ENCODE measurements at regions of chr14 and their contacts with region 1.

Region 1: DNA sequence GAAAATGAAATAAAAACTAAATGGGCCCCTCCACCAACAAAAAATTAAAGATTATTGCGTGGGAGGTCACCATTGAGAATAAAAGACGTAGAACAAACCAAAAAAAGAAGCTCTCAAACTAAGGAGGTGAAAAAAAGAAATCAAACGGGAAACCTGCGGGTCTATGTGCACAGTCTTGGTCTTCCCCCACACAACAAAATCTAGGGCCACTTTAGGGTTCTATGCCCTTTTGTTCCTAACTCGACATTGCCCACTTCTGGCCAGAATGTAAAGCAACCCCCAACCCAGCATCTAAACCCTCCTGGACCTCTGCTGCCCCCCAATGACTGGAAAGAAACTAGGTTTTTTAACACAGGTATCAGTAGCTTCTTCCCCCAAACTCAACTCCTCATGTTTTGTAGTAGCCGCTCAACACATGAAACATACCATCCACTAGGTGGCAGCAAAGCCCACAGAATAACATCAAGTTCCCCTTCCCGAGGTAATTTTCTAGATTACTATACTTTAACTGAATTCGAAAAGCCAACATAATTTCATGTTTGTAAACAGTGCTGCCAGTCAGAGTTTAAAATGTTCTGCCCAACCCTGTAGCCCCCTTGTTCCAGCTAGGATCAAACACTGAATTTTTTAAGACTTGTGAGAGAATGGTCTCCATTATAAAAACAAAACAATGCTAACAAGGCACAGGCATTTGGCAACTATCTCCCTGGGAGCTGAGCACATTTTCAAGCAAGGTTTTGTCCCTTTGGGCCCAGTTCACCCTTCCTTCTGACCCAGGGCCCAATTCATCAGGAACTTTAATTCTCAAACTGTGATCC is 18.7 kb downstream of the DAD1 start:
- DNase-seq: peak; percentile 91
- H3K4me3 Mint-ChIP-seq: peak overlapping the region; percentile 79
- H3K27ac Mint-ChIP-seq: peak overlapping the region; percentile 98
- H3K4me1 Mint-ChIP-seq: peaks cover 59% of the 10 kb centered on the region
- H3K27me3 Mint-ChIP-seq: no peaks in the 10 kb centered on the region

Region 2: GRCh38 chr14:21917699-21918436 is 652.5 kb before region 1 on chr14:
- CTCF ChIA-PET with region 1: interaction called, 31 read pairs
- DNase-seq: peak; percentile 77
- H3K4me3 Mint-ChIP-seq: peak overlapping the region; percentile 71
- H3K27ac Mint-ChIP-seq: peak overlapping the region; percentile 81
- H3K4me1 Mint-ChIP-seq: peaks cover 78% of the 10 kb centered on the region
- H3K27me3 Mint-ChIP-seq: no peaks in the 10 kb centered on the region

Region 3: GRCh38 chr14:22002860-22003309 is 567.5 kb before region 1 on chr14:
- CTCF ChIA-PET with region 1: interaction called, 19 read pairs
- DNase-seq: peak; percentile 80
- H3K4me3 Mint-ChIP-seq: peak overlapping the region; percentile 70
- H3K27ac Mint-ChIP-seq: peak overlapping the region; percentile 87
- H3K4me1 Mint-ChIP-seq: peaks cover 36% of the 10 kb centered on the region
- H3K27me3 Mint-ChIP-seq: no peaks in the 10 kb centered on the region

Region 4: DNA sequence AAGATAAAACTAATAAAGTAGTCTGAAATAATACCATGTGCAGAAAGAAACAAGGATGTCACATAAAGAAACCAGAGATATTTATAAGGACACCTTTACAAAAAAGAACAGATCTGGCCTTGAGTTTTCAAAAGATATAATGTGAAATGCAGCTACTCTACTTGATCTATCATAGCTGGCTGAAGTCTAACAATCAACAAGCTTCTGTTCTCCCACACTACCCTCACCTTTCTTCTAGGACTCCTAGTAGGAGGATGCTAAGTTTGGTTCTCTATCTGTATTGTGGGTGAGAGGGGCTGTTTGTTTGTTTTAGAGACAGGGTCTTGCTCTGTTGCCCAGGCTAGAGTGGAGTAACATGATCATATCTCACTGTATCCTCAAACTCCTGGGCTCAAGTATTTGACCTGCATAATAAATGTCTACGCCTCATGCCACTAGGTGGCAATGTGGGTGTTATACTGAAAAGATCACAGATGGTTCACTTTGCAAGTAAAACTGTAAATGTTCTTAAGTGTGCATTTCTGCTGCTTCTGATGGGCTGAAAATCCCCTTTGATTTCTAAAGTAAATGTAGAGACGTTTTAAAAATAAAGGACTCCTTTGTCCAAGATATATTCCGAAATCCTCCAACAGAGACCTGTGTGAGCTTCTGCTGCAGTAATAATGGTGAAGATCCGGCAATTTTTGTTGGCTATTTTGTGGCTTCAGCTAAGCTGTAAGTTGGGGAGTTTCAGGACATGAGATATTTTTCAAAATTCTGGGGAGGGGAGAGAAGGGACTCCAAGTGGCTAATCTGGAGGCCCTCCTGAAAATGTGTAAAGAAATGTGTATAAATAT is 250.6 kb before region 1 on chr14:
- CTCF ChIA-PET with region 1: no interaction called
- DNase-seq: peak; percentile 25
- H3K4me3 Mint-ChIP-seq: peak overlapping the region; percentile 66
- H3K27ac Mint-ChIP-seq: peak overlapping the region; percentile 84
- H3K4me1 Mint-ChIP-seq: no peaks in the 10 kb centered on the region
- H3K27me3 Mint-ChIP-seq: no peaks in the 10 kb centered on the region

Region 5: DNA sequence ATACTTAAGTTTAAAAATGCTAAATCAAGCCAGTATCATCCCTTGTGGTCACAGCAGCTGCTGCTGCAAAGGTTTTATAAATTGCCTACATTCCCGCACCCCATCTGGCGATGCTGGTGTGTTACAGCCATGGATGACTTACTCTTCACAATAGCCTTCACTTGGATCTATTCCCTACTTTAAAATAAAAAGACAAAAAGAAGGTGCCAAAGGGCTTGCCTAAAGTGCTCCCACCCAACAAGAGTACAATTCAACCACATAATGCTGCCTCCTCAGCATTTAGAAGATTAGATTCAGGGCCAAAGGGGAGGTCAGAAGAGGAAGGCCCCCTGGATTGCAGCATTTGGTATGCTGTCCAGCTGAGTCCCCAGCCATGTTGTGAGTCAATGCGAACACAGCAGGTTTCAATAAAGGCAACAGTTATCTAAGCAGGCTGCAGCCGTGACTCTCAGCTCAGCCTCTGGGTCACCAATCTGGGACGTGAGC is 157.4 kb before region 1 on chr14:
- CTCF ChIA-PET with region 1: no interaction called
- DNase-seq: no peak
- H3K4me3 Mint-ChIP-seq: no peak overlapping the region
- H3K27ac Mint-ChIP-seq: no peak overlapping the region
- H3K4me1 Mint-ChIP-seq: no peaks in the 10 kb centered on the region
- H3K27me3 Mint-ChIP-seq: no peaks in the 10 kb centered on the region

Region 6: GRCh38 chr14:22489957-22490950 is 80.1 kb before region 1 on chr14:
- CTCF ChIA-PET with region 1: no interaction called
- DNase-seq: no peak
- H3K4me3 Mint-ChIP-seq: peak overlapping the region; percentile 84
- H3K27ac Mint-ChIP-seq: peak overlapping the region; percentile 96
- H3K4me1 Mint-ChIP-seq: peaks cover 16% of the 10 kb centered on the region
- H3K27me3 Mint-ChIP-seq: no peaks in the 10 kb centered on the region

Region 7: DNA sequence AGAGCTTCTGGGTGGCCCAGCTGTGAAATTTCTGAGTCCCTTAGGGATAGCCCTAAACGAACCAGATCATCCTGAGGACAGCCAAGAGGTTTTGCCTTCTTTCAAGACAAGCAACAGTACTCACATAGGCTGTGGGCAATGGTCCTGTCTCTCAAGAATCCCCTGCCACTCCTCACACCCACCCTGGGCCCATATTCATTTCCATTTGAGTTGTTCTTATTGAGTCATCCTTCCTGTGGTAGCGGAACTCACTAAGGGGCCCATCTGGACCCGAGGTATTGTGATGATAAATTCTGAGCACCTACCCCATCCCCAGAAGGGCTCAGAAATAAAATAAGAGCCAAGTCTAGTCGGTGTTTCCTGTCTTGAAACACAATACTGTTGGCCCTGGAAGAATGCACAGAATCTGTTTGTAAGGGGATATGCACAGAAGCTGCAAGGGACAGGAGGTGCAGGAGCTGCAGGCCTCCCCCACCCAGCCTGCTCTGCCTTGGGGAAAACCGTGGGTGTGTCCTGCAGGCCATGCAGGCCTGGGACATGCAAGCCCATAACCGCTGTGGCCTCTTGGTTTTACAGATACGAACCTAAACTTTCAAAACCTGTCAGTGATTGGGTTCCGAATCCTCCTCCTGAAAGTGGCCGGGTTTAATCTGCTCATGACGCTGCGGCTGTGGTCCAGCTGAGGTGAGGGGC is 20.2 kb before region 1 on chr14:
- CTCF ChIA-PET with region 1: interaction called, 139 read pairs
- DNase-seq: peak; percentile 69
- H3K4me3 Mint-ChIP-seq: peak overlapping the region; percentile 67
- H3K27ac Mint-ChIP-seq: peak overlapping the region; percentile 95
- H3K4me1 Mint-ChIP-seq: peaks cover 95% of the 10 kb centered on the region
- H3K27me3 Mint-ChIP-seq: peaks cover 4% of the 10 kb centered on the region

Region 8: DNA sequence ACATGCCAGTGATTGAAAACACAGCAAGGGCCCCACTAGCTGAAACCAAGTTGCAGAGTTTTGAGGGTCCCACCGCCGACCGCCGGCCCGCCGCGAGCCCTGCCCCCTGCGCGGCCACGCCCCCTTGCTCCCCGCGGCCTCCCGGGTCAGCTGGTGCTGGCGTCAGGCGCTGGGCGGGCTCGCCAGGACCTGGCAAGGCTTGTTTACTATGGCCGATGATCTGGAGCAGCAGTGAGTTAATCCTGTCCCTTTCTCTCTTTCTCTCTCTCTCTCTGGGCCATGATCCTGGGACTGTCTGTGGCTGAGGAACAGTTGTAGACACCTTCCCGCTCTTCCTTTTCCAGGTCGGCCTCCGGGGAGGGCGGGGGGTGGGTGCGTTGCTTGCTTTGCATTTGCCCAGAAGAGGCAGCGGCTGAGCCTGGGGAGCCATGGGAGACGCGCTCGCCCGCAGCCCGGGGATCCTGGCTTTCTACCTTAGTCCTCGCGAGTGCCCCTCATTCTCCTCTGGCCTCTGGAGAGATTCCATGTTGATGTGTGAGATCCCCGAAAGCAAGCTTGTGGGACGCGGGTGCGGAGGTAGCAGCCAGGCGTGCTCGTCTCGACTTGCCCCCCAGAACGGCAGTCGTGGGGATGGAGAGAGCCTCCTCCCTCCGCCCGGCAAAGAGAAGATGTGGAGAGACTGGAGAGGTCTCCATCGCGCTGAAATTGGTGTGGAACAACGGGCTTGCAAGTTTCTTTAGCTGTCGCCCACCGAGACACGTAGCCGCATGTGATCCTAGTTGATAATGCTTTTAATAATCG is 28.0 kb after region 1 on chr14 and contains the start of gene ABHD4:
- CTCF ChIA-PET with region 1: interaction called, 116 read pairs
- DNase-seq: peak; percentile 84
- H3K4me3 Mint-ChIP-seq: peak within 1 kb of the TSS; percentile 88
- H3K27ac Mint-ChIP-seq: peak within 1 kb of the TSS; percentile 85
- H3K4me1 Mint-ChIP-seq: peaks cover 33% of the 10 kb centered on the region
- H3K27me3 Mint-ChIP-seq: peaks cover 31% of the 10 kb centered on the region

Region 9: DNA sequence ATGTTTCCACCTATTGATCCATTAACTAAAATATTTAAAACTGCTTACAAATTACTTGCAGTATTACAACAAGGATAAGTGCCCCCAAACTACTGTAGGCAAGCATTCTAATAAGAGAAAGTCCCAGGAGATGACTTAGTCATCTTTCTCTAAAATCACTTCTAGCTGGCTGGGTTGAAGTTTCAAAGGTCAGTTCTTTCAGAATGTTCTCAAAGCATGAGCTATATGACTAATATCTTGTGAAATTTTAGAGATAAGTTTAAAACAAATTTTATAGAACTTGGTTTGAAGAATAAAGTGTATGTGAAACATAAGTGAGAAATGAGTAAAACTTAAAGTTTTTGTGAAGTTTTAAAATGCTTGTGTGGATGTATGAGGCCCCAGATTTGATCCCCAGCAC is 98.1 kb after region 1 on chr14:
- CTCF ChIA-PET with region 1: no interaction called
- DNase-seq: no peak
- H3K4me3 Mint-ChIP-seq: no peak overlapping the region
- H3K27ac Mint-ChIP-seq: no peak overlapping the region
- H3K4me1 Mint-ChIP-seq: no peaks in the 10 kb centered on the region
- H3K27me3 Mint-ChIP-seq: peaks cover 4% of the 10 kb centered on the region

Region 10: DNA sequence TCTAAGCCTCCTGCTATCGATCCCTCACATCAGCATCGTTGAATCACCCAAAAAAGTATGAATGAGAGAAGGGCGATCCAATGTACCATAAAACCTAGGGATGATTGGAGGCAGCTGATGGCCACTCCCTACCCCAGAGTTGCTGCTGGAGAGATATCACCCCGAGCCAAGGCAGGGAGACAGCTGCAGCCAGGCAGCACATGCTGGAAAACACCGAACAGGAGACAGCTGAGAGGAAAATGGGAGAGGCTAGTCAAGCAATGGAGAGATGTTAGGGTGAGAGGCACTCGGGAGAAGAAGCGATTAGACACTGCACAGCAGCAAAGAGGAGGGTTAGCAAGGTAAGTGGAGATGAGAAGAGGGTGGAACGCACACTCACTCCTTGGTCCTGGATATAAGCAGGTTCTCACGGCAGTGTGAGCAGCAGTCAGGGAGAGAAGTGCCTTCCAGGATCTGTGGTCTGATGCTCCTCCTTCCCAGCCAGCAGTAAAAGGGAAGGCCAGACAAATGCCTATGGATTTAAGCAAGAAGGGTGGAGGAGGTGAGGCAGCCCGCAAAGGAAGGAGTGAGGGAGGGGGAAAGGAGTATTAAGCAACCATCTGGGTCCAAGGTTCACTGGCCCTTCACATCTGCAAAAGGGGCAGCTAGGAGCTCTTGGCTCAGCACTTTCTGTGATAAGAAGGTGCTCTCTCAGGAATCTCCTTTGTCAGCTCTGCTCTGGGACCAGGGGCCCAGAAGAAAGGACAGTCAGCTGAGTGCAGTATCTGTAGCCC is 244.8 kb after region 1 on chr14 and contains the start of gene SLC7A7:
- CTCF ChIA-PET with region 1: interaction called, 16 read pairs
- DNase-seq: no peak
- H3K4me3 Mint-ChIP-seq: no peak within 1 kb of the TSS
- H3K27ac Mint-ChIP-seq: no peak within 1 kb of the TSS
- H3K4me1 Mint-ChIP-seq: peaks cover 31% of the 10 kb centered on the region
- H3K27me3 Mint-ChIP-seq: peaks cover 28% of the 10 kb centered on the region

Region 11: DNA sequence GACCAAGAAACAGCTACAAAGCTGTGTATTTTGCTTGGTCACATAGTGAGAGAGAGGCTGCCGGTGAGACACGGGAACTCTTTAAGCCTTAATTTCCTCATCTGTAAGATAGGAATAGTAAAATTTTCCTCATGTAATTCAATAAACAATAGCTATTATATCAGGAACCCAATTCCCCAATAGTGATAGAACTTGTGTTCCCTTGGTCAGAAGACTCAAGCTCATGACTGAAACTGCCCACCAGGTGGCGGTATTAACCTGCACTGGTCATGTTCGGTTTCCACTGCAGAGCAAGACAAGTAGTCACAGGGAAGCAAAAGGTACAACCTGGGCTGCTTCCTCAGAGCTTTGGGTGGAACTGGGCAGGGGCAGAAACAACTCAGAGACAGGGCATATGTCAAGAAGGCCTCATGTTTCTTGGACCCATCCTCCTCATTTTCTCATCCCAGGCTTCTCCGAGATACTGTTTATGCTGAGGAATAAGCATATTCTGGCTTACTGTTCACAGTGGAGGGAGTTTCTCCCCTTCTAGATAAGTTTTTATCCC is 416.2 kb after region 1 on chr14:
- CTCF ChIA-PET with region 1: interaction called, 14 read pairs
- DNase-seq: peak; percentile 94
- H3K4me3 Mint-ChIP-seq: no peak overlapping the region
- H3K27ac Mint-ChIP-seq: no peak overlapping the region
- H3K4me1 Mint-ChIP-seq: no peaks in the 10 kb centered on the region
- H3K27me3 Mint-ChIP-seq: no peaks in the 10 kb centered on the region